ENCODE measurements at regions of chr22 and their contacts with region 1.

Region 1: DNA sequence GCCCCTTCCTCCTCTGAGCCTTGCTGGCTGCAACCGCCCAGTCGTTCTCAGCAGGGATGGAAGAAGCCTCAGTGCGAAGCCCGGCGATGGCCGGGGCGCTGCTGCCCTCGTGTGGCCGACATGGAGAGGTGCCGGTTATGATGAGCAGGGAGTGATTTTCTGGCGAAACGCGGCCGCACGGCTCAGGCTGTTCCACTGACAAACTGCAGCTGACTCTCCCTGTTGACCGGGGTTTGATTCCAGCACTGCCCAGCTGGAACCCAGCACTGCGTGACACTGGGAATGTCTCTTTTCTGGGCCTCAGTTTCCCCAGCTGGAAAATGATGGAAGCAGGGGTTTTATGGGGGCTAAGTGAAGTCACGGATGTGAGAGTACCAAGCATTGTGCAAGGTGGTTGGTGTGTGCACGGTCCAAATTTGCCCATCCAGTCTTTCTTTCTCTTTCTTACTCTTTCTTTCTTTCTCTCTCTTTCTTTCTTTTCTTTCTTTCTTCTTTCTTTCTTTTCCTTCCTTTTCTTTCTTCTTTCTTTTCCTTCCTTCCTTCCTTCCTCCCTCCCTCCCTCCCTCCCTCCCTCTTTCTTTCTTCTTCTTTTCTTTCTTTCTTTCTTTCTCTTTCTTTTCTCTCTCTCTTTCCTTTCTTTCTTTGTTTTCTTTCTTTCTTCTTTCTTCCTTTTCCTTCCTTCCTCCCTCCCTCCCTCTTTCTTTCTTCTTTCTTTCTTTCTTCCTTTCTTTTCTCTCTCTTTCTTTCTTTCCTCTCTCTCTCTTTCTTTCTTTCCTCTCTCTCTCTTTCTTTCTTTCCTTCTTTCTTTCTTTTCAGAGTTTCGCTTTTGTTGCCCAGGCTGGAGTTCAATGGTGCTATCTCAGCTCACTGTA is 25.8 kb upstream of the MPPED1 start:
- DNase-seq: peak; percentile 94
- H3K4me3 ChIP-seq: no peak overlapping the region
- H3K27ac ChIP-seq: no peak overlapping the region
- H3K4me1 ChIP-seq: peaks cover 0 to 20% (median 11%) of the 10 kb centered on the region in 6 donors
- H3K27me3 ChIP-seq: peaks cover 0 to 49% (median 13%) of the 10 kb centered on the region in 7 donors
- CTCF ChIP-seq: peak; percentile 63 to 96 (median 86)
- POLR2A ChIP-seq: no peak

Region 2: DNA sequence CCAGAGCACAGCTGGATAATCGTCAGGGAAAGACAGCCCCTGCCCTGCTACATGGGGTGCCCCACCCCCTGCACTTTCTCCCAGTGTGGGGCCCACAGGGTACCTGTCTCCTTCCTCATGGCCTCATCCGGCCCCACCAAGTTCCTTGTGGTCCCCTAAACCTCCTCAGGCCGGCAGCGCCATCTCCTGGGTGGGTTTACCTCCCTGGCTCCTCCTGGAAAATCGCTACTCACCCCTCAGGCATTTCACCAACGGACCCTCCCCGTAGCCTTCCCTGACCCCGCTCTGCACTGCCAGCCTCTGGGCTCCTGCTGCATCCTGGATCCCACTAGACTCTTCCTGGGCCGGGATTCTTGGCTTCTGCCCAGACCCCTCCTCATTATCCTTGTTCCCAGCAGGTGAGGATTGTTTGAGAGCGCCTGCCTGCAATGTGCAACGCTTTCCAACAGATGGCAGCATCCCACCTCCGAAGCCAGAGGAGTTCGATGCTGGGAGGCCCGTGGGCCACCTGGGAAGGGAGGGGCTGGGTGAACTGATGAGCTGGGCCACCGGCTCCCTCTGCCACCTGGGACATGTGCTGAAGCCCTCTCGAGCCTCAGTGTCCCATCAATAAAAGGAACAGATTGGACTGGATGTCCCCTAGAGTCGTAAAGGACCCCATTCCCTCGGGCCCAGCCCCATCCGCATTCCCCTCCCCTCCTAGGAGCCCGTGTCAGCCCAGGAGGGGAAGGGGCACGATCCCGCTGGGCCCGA is 154.9 kb before region 1 on chr22:
- intact Hi-C with region 1: loop called (anchors 2 kb)
- DNase-seq: peak; percentile 86
- H3K4me3 ChIP-seq: no peak overlapping the region
- H3K27ac ChIP-seq: peak overlapping the region in 4 of 8 donors; percentile 12 to 59 (median 50)
- H3K4me1 ChIP-seq: peaks cover 2 to 35% (median 17%) of the 10 kb centered on the region in 6 donors
- H3K27me3 ChIP-seq: peaks cover 0 to 16% (median 0%) of the 10 kb centered on the region in 7 donors
- CTCF ChIP-seq: peak; percentile 73 to 94 (median 88)
- POLR2A ChIP-seq: no peak

Region 3: DNA sequence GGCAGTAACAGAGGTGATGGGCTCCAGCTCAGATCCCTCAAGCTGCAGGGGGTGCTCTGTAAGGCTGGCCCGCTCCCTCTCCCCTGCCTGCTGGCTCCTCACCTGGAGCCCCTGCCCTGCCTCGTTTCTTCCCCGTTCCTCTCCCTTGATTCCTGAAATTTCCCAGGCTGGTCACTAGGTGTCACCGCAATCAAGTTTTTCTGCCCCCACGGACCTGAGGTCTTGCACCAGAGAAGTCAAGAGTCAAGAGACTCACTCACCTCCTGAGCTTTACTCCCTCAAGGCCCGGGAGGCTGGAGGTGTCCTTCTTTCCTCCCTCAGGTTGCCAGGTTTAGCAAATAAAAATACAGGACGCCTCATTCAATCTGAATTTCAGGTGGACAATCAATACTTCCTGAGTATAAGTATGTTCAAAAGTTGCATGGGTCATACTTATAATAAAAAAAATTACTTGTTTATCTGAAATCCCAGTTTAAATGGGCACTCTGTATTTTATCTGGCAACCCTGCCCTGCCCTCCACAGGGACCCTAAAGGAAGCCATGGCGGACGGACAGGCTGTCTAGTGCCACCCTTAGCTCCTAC is 112.0 kb before region 1 on chr22:
- intact Hi-C with region 1: loop called (anchors 5 kb)
- DNase-seq: no peak
- H3K4me3 ChIP-seq: no peak overlapping the region
- H3K27ac ChIP-seq: peak overlapping the region in 3 of 8 donors; percentile 30 to 80 (median 44)
- H3K4me1 ChIP-seq: peaks cover 3 to 45% (median 15%) of the 10 kb centered on the region in 6 donors
- H3K27me3 ChIP-seq: peaks cover 0 to 15% (median 0%) of the 10 kb centered on the region in 7 donors
- CTCF ChIP-seq: peak; percentile 42 to 83 (median 67)
- POLR2A ChIP-seq: no peak

Region 4: GRCh38 chr22:44625981-44626687 is 1240.1 kb after region 1 on chr22:
- intact Hi-C with region 1: loop called (anchors 10 kb)
- DNase-seq: peak; percentile 92
- H3K4me3 ChIP-seq: no peak overlapping the region
- H3K27ac ChIP-seq: no peak overlapping the region
- H3K4me1 ChIP-seq: peaks cover 0 to 11% (median 7%) of the 10 kb centered on the region in 6 donors
- H3K27me3 ChIP-seq: peaks cover 0 to 47% (median 0%) of the 10 kb centered on the region in 7 donors
- CTCF ChIP-seq: peak; percentile 94 to 100 (median 98)
- POLR2A ChIP-seq: no peak